ENCODE measurements at regions of chr15 and their contacts with region 1.

Region 1: DNA sequence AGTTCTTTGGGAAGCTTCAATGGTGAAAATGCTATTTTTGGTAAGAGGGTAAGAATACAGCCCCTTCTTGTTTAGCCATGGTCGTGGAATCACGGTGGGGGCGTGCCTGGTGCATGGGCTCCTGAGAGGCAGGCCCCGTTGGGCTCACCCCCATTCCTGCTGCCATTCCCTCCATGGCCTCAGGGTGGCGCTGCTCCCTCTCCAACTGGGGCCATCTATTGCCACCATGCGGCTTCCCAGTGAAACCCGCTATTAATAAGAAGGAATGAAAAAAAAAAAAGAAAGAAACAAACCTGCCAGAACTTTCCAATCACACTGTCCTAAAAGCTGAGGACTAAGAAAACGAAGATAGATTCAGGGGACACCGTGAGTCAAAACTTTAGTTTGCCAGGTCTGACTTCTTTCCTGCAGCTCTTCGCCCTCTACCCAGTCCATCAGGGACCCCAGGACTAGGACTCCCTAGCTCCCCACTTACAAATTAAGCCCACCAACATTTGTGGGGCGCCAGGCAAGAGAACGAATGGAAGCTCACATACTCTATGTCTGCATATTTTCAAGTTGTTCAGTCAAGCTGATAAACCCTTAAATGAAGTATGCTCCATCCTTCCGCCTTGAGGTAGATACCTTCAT is 30.6 kb upstream of the ABHD2 start:
- DNase-seq: peak; percentile 81 to 86
- ATAC-seq: peak; percentile 87 to 94 (median 92)
- H3K4me3 ChIP-seq: no peak overlapping the region
- H3K27ac ChIP-seq: no peak overlapping the region
- H3K4me1 ChIP-seq: peaks cover 0 to 12% (median 6%) of the 10 kb centered on the region in 9 donors
- H3K27me3 ChIP-seq: no peaks in the 10 kb centered on the region
- CTCF ChIP-seq: peak; percentile 98 to 99 (median 99)

Region 2: DNA sequence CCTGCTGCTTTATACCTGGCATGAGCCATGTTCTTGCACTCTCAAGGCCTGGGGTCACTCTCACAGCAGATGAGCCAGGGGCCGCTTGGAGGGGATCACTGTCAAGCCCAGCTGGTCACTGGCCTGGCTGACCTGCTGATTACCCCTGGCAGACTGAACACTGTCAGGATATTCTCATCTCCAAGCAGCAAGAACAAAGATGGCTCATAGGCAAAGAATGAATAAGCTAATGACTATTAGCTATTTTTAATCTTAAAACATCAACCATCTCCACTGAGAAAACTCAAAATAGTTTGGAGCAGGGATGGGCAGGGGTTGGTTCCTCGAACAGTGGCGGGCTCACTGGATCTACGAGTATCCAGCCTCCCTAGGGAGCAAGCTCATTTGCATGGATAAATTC is 318.8 kb before region 1 on chr15:
- intact Hi-C with region 1: no loop called
- DNase-seq: no peak
- ATAC-seq: peak in 2 of 8 donors; percentile 37 to 42
- H3K4me3 ChIP-seq: no peak overlapping the region
- H3K27ac ChIP-seq: no peak overlapping the region
- H3K4me1 ChIP-seq: no peaks in the 10 kb centered on the region
- H3K27me3 ChIP-seq: peaks cover 3 to 74% (median 41%) of the 10 kb centered on the region in 7 donors
- CTCF ChIP-seq: no peak

Region 3: GRCh38 chr15:89087830-89088604 is 30.4 kb after region 1 on chr15 and contains the start of gene ABHD2:
- intact Hi-C with region 1: no loop called
- DNase-seq: peak; percentile 99 to 100
- ATAC-seq: peak; percentile 90 to 96 (median 94)
- H3K4me3 ChIP-seq: peak within 1 kb of the TSS; percentile 79 to 98 (median 90)
- H3K27ac ChIP-seq: peak within 1 kb of the TSS; percentile 91 to 98 (median 96)
- H3K4me1 ChIP-seq: peaks cover 0 to 68% (median 46%) of the 10 kb centered on the region in 9 donors
- H3K27me3 ChIP-seq: no peaks in the 10 kb centered on the region
- CTCF ChIP-seq: no peak
- total RNA-seq, gene ABHD2: 74.9 to 201 (median 123) TPM

Region 4: DNA sequence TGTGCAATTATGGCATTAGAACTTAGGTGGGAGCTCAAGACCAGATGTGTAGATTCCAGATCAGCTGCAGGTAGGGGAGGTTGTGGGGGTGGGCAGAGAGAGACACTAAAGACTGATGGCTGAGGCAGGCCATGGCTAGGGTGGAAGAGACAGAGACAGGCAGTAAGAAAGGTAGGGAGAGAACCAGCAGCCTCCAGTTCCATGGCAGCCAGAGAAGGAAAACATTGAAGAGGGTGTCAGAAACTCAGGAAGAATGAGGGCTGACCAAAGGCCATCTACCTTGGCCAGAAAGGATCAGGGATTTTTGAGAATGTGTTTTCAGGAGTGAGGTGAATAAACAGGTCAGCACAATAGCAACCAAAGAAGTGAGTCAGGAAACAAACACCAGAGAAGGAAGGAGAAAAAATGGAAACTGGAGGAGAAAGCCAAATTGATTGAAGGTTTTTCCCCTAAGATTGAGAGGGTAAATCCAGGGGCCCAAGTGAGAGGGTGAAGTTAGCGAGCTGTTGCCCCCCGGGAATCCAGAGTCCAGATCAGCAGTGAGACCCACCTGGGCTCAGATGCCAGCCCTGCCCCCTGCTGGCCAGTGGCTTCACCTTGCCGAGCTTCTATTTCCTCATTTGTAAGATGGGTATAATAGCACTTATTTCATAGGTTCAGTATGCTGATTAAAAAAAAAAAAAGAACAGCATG is 71.7 kb after region 1 on chr15:
- intact Hi-C with region 1: loop called in 3 of 10 experiments (anchors 5 kb)
- DNase-seq: peak in 1 of 2 donors; percentile 39
- ATAC-seq: peak in 2 of 8 donors; percentile 26 to 27
- H3K4me3 ChIP-seq: no peak overlapping the region
- H3K27ac ChIP-seq: peak overlapping the region in 7 of 10 donors; percentile 28 to 88 (median 42)
- H3K4me1 ChIP-seq: peaks cover 12 to 87% (median 65%) of the 10 kb centered on the region in 9 donors
- H3K27me3 ChIP-seq: no peaks in the 10 kb centered on the region
- CTCF ChIP-seq: peak; percentile 30 to 71 (median 61)

Region 5: DNA sequence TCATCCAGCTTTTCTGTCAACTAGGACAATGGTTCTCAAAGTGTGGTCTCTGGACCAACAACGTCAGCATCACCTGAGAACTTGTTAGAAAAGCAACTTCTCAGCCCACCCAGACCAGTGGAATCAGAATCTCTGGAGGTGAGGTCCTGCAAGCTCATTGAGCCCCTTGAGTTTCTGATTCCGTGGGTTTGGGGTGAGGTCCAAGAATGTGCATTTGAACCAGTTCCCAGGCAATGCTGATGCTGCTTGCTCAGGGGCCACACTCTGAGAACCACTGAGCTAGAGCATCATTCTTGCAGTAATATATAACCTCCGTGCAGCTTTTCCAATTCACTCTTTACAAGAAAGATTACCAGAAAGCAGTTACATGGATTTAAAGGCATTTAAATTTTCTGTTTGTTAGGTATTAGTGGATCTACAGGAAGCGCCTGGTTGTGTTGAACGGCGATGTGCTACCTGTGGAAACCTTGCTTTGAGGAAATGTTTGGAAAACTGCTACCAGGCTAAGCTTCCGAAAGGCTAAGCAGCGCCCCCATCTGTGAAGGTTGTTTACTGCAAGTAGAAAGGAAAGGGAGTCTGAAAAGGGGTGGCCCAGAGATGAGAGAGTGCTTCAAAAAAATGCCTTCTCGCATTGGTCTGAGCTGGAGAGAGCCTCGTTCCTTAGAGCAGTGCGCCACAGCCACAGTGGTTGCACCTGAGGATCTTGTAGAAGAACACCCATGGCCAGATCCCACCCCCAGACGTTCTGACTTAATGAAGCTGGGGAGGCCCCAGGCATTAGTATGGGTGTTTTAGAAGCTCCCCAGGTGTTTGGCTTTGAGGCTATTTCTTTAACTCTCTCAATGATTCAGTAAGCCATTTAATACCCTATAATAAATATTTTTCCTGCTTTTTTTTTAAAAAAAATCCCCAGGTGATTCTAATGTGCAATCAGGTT is 113.8 kb after region 1 on chr15:
- intact Hi-C with region 1: loop called in 6 of 10 experiments (anchors 1 to 5 kb)
- DNase-seq: peak in 1 of 2 donors; percentile 36
- ATAC-seq: peak in 2 of 8 donors; percentile 7 to 16
- H3K4me3 ChIP-seq: no peak overlapping the region
- H3K27ac ChIP-seq: no peak overlapping the region
- H3K4me1 ChIP-seq: peaks cover 0 to 61% (median 31%) of the 10 kb centered on the region in 9 donors
- H3K27me3 ChIP-seq: no peaks in the 10 kb centered on the region
- CTCF ChIP-seq: peak; percentile 39 to 76 (median 63)

Region 6: GRCh38 chr15:89177633-89178306 is 120.2 kb after region 1 on chr15:
- intact Hi-C with region 1: loop called (anchors 1 to 5 kb)
- DNase-seq: peak; percentile 40 to 77
- ATAC-seq: peak in 7 of 8 donors; percentile 25 to 72 (median 54)
- H3K4me3 ChIP-seq: no peak overlapping the region
- H3K27ac ChIP-seq: peak overlapping the region in 7 of 10 donors; percentile 9 to 58 (median 39)
- H3K4me1 ChIP-seq: peaks cover 0 to 53% (median 21%) of the 10 kb centered on the region in 9 donors
- H3K27me3 ChIP-seq: no peaks in the 10 kb centered on the region
- CTCF ChIP-seq: peak; percentile 56 to 90 (median 86)

Region 7: GRCh38 chr15:89299896-89300295 is 242.3 kb after region 1 on chr15:
- intact Hi-C with region 1: loop called in 1 of 10 experiments (anchors 10 kb)
- DNase-seq: no peak
- ATAC-seq: peak in 1 of 8 donors; percentile 53
- H3K4me3 ChIP-seq: no peak overlapping the region
- H3K27ac ChIP-seq: no peak overlapping the region
- H3K4me1 ChIP-seq: no peaks in the 10 kb centered on the region
- H3K27me3 ChIP-seq: no peaks in the 10 kb centered on the region
- CTCF ChIP-seq: peak in 6 of 9 donors; percentile 17 to 51 (median 41)

Region 8: GRCh38 chr15:89690276-89691218 is 632.9 kb after region 1 on chr15 and contains the starts of genes PEX11A and WDR93:
- intact Hi-C with region 1: no loop called
- DNase-seq: peak; percentile 77 to 79
- ATAC-seq: peak; percentile 85 to 98 (median 96)
- H3K4me3 ChIP-seq: peak within 1 kb of the TSS; percentile 59 to 86 (median 70)
- H3K27ac ChIP-seq: peak within 1 kb of the TSS in 8 of 10 donors; percentile 41 to 78 (median 62)
- H3K4me1 ChIP-seq: peaks cover 0 to 16% (median 10%) of the 10 kb centered on the region in 9 donors
- H3K27me3 ChIP-seq: no peaks in the 10 kb centered on the region
- CTCF ChIP-seq: no peak
- total RNA-seq, gene PEX11A: 6.0 to 14.3 (median 9.0) TPM
- total RNA-seq, gene WDR93: 0.15 TPM in 2 of 10 donors, not detected in the others